Aorta (tissue), 5 donors: ENCODE measurements at regions of chr12 and their contacts with region 1.

Region 1: DNA sequence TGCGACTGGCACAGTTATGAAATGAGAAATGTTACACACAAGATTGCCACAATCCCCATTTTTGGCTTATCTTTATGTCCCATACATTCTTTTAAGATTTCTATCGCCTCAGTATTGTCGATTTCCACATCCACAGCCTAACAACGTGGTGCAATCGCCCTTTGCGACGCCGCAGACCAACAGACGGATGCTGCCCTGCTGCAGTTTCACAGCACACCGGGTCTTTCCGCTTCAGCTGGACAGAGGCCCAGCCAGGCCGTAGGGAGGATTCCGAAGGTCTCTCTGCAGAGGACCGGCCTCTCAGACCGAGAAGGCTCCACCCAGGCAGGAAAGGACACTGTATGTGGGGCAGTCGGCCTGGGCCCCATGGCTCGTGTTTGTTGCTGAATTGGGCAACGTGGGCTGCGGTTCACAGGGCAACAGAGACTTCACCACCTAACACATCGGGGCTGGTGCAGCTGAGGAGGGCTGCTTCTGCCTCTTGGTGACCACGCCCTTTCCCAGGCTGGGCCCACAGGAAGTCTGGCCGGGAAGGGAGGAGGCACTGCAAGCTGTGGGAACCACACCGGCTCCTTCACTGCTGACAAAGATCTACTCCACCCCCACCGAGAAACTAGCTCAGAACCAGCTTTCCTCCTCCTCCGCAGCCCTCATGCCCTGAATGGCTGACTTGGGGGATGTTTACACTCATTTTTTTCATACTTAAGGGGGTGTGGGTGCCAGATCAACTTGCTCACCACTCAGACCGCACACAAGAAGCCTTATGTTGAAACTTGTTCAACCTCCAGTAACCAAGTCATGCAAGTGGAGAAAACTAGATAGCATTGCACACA is 32.9 kb upstream of the MDM1 start:
- DNase-seq: peak; percentile 94 to 96
- ATAC-seq: peak; percentile 95
- H3K4me3 ChIP-seq: peak overlapping the region in 1 of 2 donors; percentile 9
- H3K27ac ChIP-seq: peak overlapping the region; percentile 14 to 86
- H3K4me1 ChIP-seq: no peaks in the 10 kb centered on the region
- H3K27me3 ChIP-seq: no peaks in the 10 kb centered on the region

Region 2: GRCh38 chr12:68406134-68406594 is 41.1 kb after region 1 on chr12:
- intact Hi-C with region 1: loop called in 1 of 2 experiments (anchors 5 kb)
- DNase-seq: peak; percentile 94 to 95
- ATAC-seq: peak; percentile 96
- H3K4me3 ChIP-seq: no peak overlapping the region
- H3K27ac ChIP-seq: no peak overlapping the region
- H3K4me1 ChIP-seq: peaks cover 0 to 2% of the 10 kb centered on the region in 2 donors
- H3K27me3 ChIP-seq: no peaks in the 10 kb centered on the region

Region 3: DNA sequence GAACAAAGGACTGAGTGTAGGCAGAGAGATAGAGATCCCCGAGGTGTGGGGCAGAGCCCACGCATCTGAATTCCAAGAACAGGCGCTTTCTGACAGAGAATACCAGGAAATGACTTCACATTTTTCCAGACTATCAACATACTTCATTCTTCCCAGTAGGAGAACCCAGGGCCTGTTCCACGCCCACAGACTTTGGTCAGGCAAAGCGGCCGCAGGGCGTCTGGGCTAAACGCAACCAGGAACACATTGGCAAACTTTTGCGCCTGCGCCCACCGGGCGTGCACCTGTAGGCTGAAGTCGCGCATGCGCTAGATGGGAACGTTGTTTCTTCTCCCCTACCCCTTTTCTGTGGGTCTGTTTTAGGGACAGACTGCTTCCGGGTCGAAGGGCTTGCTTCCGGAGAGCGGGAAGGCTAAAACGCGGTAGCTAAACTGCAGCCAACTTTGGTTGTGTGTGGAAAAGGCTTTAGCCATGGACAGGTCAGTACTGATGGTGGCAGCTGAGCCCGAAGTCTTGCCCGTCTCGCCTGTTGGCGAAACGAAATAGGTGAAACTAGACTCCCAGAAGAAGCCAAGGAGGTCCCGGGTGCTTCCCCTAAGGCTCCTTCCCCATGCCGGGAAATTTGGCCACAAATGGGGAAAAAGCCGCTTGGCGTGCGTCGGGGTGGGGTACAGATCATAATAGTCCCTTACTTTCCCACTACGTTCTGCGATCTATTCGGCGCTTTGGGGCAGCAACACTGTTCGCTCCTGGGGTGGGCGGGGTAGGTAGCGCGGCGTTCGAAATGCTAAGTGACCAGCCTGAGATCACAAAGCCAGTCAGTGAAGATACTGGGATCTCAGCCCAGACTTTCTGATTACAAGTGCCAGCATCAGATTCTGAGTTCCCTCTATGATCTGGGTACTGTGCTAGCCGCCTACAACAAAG is 321.7 kb after region 1 on chr12 and contains the start of gene NUP107:
- intact Hi-C with region 1: loop called in 1 of 2 experiments (anchors 2 kb)
- DNase-seq: peak; percentile 99 to 100
- ATAC-seq: peak; percentile 98
- H3K4me3 ChIP-seq: peak within 1 kb of the TSS; percentile 41 to 60
- H3K27ac ChIP-seq: peak within 1 kb of the TSS; percentile 1 to 52
- H3K4me1 ChIP-seq: no peaks in the 10 kb centered on the region
- H3K27me3 ChIP-seq: no peaks in the 10 kb centered on the region
- total RNA-seq, gene NUP107: 36.0 to 53.4 TPM

Region 4: GRCh38 chr12:68807576-68808387 is 442.7 kb after region 1 on chr12 and contains the start of gene MDM2:
- intact Hi-C with region 1: loop called in 1 of 2 experiments (anchors 10 kb)
- DNase-seq: peak; percentile 95 to 98
- ATAC-seq: peak; percentile 98
- H3K4me3 ChIP-seq: peak within 1 kb of the TSS; percentile 91 to 92
- H3K27ac ChIP-seq: peak within 1 kb of the TSS; percentile 98 to 99
- H3K4me1 ChIP-seq: no peaks in the 10 kb centered on the region
- H3K27me3 ChIP-seq: no peaks in the 10 kb centered on the region
- total RNA-seq, gene MDM2: 100 to 121 TPM